ENCODE measurements at regions of chr14 and their contacts with region 1.

Region 1: GRCh38 chr14:64340560-64341196 is 46.5 kb upstream of the ESR2 start:
- DNase-seq: no peak
- ATAC-seq: no peak
- H3K4me3 ChIP-seq: no peak overlapping the region
- H3K27ac ChIP-seq: no peak overlapping the region
- H3K4me1 ChIP-seq: peaks cover 6 to 19% of the 10 kb centered on the region in 2 donors
- H3K27me3 ChIP-seq: no peaks in the 10 kb centered on the region
- CTCF ChIP-seq: no peak

Region 2: GRCh38 chr14:64478634-64479250 is 138.1 kb after region 1 on chr14:
- intact Hi-C with region 1: loop called in 1 of 2 experiments (anchors 10 kb)
- DNase-seq: peak in 2 of 4 donors; percentile 27 to 48
- ATAC-seq: peak; percentile 62
- H3K4me3 ChIP-seq: no peak overlapping the region
- H3K27ac ChIP-seq: no peak overlapping the region
- H3K4me1 ChIP-seq: no peaks in the 10 kb centered on the region
- H3K27me3 ChIP-seq: no peaks in the 10 kb centered on the region
- CTCF ChIP-seq: peak in 1 of 2 donors; percentile 32

Region 3: GRCh38 chr14:64636208-64636979 is 295.7 kb after region 1 on chr14:
- intact Hi-C with region 1: loop called in 1 of 2 experiments (anchors 10 kb)
- DNase-seq: peak in 3 of 4 donors; percentile 67 to 87 (median 78)
- ATAC-seq: peak; percentile 95
- H3K4me3 ChIP-seq: no peak overlapping the region
- H3K27ac ChIP-seq: no peak overlapping the region
- H3K4me1 ChIP-seq: peaks cover 0 to 19% of the 10 kb centered on the region in 2 donors
- H3K27me3 ChIP-seq: peaks cover 0 to 2% of the 10 kb centered on the region in 2 donors
- CTCF ChIP-seq: peak; percentile 82 to 93

Region 4: DNA sequence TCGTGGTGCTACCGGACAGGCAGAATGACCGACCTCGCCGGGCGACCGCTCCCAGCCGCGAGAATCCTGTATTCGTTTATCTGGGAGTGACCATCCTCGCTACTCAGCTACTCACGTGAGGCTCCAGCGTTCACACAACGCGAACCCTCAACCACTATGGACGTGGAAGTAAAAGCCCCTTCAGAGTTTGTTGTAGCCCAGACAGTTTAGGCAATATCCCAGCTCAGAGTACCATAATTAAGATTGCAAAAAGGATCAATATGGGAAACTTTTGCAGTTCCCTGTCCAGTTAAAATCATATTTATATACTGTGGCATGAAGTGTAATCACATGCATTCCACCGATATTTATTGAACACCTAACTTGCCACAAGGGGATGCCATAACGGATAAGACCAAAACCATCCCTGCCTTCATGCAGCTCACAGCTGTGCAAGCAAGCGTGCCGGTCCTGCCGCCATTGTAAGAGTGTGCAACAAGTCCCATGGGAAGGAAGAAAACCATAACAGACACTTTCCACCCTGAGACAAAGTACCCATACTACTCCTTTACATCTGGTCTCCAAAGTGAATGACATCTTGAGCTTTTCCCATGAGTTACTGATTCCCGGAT is 762.6 kb after region 1 on chr14:
- intact Hi-C with region 1: no loop called
- DNase-seq: peak in 1 of 4 donors; percentile 71
- ATAC-seq: peak; percentile 3
- H3K4me3 ChIP-seq: peak overlapping the region; percentile 72 to 97
- H3K27ac ChIP-seq: peak overlapping the region; percentile 26 to 98
- H3K4me1 ChIP-seq: peaks cover 15 to 36% of the 10 kb centered on the region in 2 donors
- H3K27me3 ChIP-seq: no peaks in the 10 kb centered on the region
- CTCF ChIP-seq: no peak